Activated CD4-positive, alpha-beta T cell treated with anti-CD3 and anti-CD28 coated beads for 36 hours (primary cell): ENCODE measurements at regions of chr1 and their contacts with region 1.

Region 1: GRCh38 chr1:179002552-179003345 is 22.9 kb upstream of the FAM20B start:
- DNase-seq: peak; percentile 82
- ATAC-seq: peak; percentile 81
- H3K4me3 Mint-ChIP-seq: no peak overlapping the region
- H3K27ac Mint-ChIP-seq: peak overlapping the region; percentile 49
- H3K4me1 Mint-ChIP-seq: peaks cover 13% of the 10 kb centered on the region
- H3K27me3 Mint-ChIP-seq: no peaks in the 10 kb centered on the region

Region 2: GRCh38 chr1:178532392-178532791 is 470.4 kb before region 1 on chr1:
- CTCF ChIA-PET with region 1: interaction called, 13 read pairs
- POLR2A ChIA-PET with region 1: no interaction called
- intact Hi-C with region 1: loop called (anchors 1 to 2 kb)
- DNase-seq: peak; percentile 86
- ATAC-seq: peak; percentile 84
- H3K4me3 Mint-ChIP-seq: no peak overlapping the region
- H3K27ac Mint-ChIP-seq: no peak overlapping the region
- H3K4me1 Mint-ChIP-seq: no peaks in the 10 kb centered on the region
- H3K27me3 Mint-ChIP-seq: no peaks in the 10 kb centered on the region

Region 3: GRCh38 chr1:178768423-178768822 is 234.3 kb before region 1 on chr1:
- CTCF ChIA-PET with region 1: interaction called, 60 read pairs
- POLR2A ChIA-PET with region 1: interaction called, 3 read pairs
- intact Hi-C with region 1: no loop called
- DNase-seq: peak; percentile 28
- ATAC-seq: peak; percentile 53
- H3K4me3 Mint-ChIP-seq: no peak overlapping the region
- H3K27ac Mint-ChIP-seq: no peak overlapping the region
- H3K4me1 Mint-ChIP-seq: no peaks in the 10 kb centered on the region
- H3K27me3 Mint-ChIP-seq: no peaks in the 10 kb centered on the region

Region 4: GRCh38 chr1:179016747-179017549 is 14.2 kb after region 1 on chr1:
- CTCF ChIA-PET with region 1: interaction called, 20 read pairs
- POLR2A ChIA-PET with region 1: no interaction called
- intact Hi-C with region 1: no loop called
- DNase-seq: no peak
- ATAC-seq: no peak
- H3K4me3 Mint-ChIP-seq: no peak overlapping the region
- H3K27ac Mint-ChIP-seq: no peak overlapping the region
- H3K4me1 Mint-ChIP-seq: peaks cover 3% of the 10 kb centered on the region
- H3K27me3 Mint-ChIP-seq: no peaks in the 10 kb centered on the region

Region 5: GRCh38 chr1:179034720-179035119 is 32.0 kb after region 1 on chr1:
- CTCF ChIA-PET with region 1: interaction called, 3 read pairs
- POLR2A ChIA-PET with region 1: interaction called, 3 read pairs
- intact Hi-C with region 1: loop called in 1 of 2 experiments (anchors 1 kb)
- DNase-seq: no peak
- ATAC-seq: peak; percentile 80
- H3K4me3 Mint-ChIP-seq: no peak overlapping the region
- H3K27ac Mint-ChIP-seq: peak overlapping the region; percentile 84
- H3K4me1 Mint-ChIP-seq: peaks cover 85% of the 10 kb centered on the region
- H3K27me3 Mint-ChIP-seq: no peaks in the 10 kb centered on the region